GM18951 (cell line): ENCODE measurements at regions of chr20 and their contacts with region 1.

Region 1: DNA sequence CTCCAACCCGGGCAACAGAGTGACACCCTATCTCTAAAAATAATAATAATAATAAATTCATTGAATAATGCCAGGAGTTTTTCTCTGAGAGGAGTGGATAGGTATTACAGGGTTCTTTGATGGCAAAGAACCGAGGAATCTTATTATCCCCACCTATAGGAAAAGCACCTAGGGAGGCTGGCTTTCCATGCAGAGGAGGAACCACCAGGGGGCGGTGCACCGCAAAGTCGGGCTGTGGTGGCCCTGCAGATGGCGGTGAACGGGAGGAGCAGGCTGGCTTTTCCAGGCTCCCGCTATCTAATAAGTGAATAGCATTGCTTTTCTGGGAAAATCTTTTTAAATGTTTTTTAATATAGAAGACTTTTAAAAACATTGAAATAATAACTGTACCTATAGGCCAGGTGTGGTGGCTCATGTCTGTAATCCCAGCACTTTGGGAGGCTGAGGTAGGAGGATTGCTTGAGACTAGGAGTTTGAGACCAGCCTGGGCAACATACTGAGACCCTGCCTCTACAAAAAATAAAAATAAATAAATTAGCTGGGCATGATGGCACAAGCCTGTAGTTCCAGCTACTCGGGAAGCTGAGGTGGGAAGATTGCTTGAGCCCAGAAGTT is 864.2 kb downstream of the KIF16B start:
- POLR2A ChIP-seq: no peak

Region 2: DNA sequence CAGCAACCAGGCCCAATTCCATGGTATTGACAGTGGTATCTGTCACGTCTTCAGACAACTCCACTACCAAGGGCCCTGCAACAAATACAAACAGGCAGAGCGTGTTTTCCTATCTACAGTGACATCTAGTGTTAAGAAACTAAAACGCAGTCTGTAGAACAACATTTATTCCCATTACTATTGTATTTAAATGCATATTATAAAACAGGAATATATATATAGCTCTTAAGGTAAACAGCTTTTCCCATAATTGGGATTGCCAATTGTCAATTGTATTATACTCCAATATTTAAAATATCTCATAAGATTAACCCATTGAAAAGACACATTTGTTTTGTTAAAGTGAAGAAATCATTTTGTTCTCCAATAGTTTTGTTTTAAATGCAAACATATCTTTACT is 766.9 kb after region 1 on chr20:
- in situ Hi-C with region 1: loop called (anchors 25 kb)
- POLR2A ChIP-seq: no peak

Region 3: DNA sequence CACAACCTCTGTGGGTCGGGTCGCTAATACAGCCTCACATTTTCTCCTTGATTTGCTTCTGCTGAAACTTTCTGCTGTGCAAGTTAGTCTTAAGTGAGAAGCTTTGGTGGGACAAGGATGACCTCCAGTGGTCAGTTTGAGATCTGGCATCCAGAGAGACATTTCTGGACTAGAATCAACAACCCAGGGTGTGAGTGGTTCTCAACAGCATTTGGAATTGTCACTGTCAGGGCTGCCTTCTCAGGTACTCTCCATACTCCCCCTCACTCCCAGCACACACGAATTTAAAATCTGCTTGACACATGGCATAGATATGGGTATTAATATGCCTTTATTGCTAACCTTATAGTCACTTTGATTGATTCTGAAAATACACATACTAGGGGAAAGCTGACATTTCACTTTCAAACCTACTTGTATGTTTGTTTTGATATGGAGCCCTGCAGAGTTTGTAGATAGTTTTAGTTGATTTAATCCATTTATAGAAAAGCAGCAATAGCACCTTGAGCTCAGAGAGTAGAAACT is 1052.3 kb after region 1 on chr20:
- in situ Hi-C with region 1: loop called (anchors 25 kb)
- POLR2A ChIP-seq: no peak